ENCODE measurements at regions of chr1 and their contacts with region 1.

Region 1: DNA sequence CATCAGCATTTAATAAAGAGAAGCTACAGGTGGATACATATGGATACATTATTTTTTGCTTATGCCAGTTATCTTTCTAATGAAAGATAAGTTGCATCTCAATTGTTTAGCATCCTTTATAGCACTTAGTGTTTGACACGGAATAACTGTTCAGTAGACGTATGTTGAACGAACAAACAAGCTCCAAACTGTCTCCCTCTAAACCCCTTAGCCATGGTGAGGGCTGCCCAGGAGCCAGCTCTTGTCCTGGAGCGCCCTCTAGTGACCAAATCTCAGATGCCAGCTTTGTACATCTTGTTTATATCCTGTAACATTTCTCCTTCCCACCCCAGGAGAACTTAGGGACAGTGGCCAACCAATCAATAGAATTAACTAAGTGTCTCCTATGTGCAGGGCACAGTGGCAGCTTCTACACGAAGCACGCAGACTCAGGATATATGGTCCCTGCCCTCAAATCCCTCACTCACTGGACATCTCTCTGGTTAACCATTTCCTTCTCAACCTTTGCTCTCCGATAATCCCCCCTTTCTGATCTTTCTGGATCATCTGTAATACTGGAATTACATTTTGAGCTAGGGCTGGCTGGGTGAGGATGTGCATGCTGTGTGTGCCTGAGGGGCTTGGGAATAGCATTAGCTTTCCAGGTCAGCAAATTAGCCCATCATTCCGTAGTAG is 22.9 kb downstream of the KCNA10 start:
- DNase-seq: peak; percentile 84
- H3K4me3 ChIP-seq: no peak overlapping the region
- H3K27ac ChIP-seq: no peak overlapping the region
- H3K4me1 ChIP-seq: no peaks in the 10 kb centered on the region
- H3K27me3 ChIP-seq: no peaks in the 10 kb centered on the region
- CTCF ChIP-seq: peak; percentile 95

Region 2: DNA sequence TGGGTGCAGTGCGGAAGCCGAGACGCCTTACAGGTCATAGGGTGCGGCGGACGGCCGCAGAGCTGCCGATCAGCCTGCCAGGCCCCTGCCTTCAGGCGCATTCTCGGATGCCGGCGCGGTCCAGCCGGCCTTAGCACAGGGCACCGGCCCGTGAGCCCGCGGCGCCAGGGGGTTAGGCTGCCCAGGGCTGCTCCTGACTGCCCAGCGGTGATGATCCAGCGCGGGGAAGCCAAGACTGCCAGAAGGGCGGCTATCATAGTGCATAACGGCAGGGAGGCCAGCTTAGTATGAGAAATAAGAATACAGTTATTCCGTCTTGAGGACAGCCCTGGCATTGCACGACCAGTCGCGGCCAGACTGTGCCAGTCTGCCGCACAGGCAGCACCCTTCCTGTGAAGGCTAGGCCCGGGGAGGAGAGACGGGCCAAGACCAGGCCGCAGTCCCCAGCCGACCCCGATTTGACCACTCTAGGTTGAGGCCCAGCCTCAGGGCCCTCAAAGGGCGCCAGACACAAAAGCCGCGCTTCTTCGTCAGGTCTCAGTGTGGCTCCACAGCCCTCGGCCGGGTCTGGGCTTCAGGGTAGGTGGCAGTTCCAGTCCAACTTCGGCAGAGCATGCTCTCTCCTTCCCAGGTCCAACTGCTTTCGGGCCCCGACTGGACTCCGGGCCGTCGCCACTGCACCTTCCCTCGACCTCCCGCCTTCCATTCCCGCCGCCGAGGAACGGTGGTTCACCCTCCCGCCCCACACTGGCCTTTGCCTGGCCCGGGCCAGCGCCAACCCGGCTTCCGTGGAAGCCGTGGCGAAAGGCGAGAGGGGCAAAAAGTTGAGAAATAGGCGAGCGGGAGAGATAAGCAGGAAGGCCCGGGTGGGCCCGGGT is 426.4 kb before region 1 on chr1:
- intact Hi-C with region 1: no loop called
- DNase-seq: no peak
- H3K4me3 ChIP-seq: no peak overlapping the region
- H3K27ac ChIP-seq: no peak overlapping the region
- H3K4me1 ChIP-seq: peaks cover 4% of the 10 kb centered on the region
- H3K27me3 ChIP-seq: peaks cover 57% of the 10 kb centered on the region
- CTCF ChIP-seq: no peak

Region 3: GRCh38 chr1:110209715-110210603 is 286.1 kb before region 1 on chr1 and contains the start of gene KCNC4:
- intact Hi-C with region 1: loop called (anchors 10 kb)
- DNase-seq: peak; percentile 90
- H3K4me3 ChIP-seq: peak within 1 kb of the TSS; percentile 80
- H3K27ac ChIP-seq: peak within 1 kb of the TSS; percentile 62
- H3K4me1 ChIP-seq: no peaks in the 10 kb centered on the region
- H3K27me3 ChIP-seq: no peaks in the 10 kb centered on the region
- CTCF ChIP-seq: no peak
- total RNA-seq, gene KCNC4: 6.7 to 8.4 TPM

Measured in colonic mucosa (tissue), 4 donors.